ENCODE measurements at regions of chr1 and their contacts with region 1.

Region 1: GRCh38 chr1:232627645-232628334 is 2.1 kb downstream of the SIPA1L2 start:
- DNase-seq: peak; percentile 42
- H3K4me3 Mint-ChIP-seq: no peak overlapping the region
- H3K27ac Mint-ChIP-seq: no peak overlapping the region
- H3K4me1 Mint-ChIP-seq: peaks cover 30% of the 10 kb centered on the region
- H3K27me3 Mint-ChIP-seq: peaks cover 36% of the 10 kb centered on the region

Region 2: DNA sequence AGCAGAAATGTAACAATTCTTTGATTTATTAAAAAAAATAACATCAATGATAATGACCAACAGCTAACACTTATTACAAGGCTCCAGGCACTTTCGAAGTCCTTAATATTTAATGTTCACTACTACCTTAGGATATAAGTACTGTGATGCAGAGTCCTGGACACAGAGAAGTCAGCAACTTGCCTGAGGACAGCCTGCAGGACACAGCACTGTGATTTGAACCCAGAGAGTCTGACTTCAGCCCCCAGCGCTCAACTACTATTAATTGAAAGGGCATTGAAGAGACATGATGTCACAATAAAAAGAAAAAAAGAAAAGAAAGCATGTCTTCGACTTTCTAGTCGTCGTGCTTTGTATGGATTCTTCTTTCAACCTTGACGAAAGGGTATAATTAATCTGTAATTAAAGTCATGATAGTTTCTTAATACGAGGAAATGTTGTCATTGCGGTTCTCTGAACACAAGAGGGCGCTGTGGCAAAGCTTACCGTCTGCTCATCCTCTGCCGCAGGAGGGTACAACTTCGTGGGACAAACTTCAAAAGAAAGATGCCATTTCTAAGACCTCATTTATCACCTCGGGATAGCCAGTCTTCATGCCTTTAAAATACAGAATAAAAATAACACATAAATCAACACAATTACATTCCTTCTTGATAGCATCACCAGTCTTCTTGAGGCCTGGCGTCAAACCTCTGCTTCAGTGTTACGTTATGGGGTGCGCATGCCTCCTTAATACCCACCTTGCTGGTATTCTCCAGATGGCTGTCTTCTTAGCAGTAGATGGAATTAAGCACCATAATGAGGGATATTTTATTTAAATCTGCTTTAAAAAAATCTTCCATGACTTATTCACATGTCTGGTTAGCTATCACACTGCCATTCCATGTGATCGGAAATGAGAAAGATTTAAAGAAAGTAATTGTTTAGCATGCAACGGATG is 761.1 kb before region 1 on chr1:
- CTCF ChIA-PET with region 1: interaction called, 36 read pairs
- DNase-seq: peak; percentile 67
- H3K4me3 Mint-ChIP-seq: no peak overlapping the region
- H3K27ac Mint-ChIP-seq: no peak overlapping the region
- H3K4me1 Mint-ChIP-seq: peaks cover 28% of the 10 kb centered on the region
- H3K27me3 Mint-ChIP-seq: no peaks in the 10 kb centered on the region

Region 3: GRCh38 chr1:232393010-232393409 is 234.8 kb before region 1 on chr1:
- CTCF ChIA-PET with region 1: no interaction called
- DNase-seq: no peak
- H3K4me3 Mint-ChIP-seq: no peak overlapping the region
- H3K27ac Mint-ChIP-seq: no peak overlapping the region
- H3K4me1 Mint-ChIP-seq: no peaks in the 10 kb centered on the region
- H3K27me3 Mint-ChIP-seq: peaks cover 4% of the 10 kb centered on the region

Measured in activated naive CD4-positive, alpha-beta T cell treated with anti-CD3 and anti-CD28 coated beads, Interleukin-2, amount 10 ng/mL, durations not matched to agents 7 days and 5 days (primary cell).